ENCODE measurements at regions of chr18 and their contacts with region 1.

Region 1: GRCh38 chr18:6885992-6886796 is 156.7 kb downstream of the ARHGAP28 start:
- DNase-seq: peak in 1 of 2 donors; percentile 44
- H3K4me3 ChIP-seq: no peak overlapping the region
- CTCF ChIP-seq: no peak
- POLR2A ChIP-seq: no peak

Region 2: GRCh38 chr18:5868218-5869115 is 1017.7 kb before region 1 on chr18:
- intact Hi-C with region 1: loop called (anchors 2 kb)
- DNase-seq: peak; percentile 59 to 87
- H3K4me3 ChIP-seq: no peak overlapping the region
- CTCF ChIP-seq: no peak
- POLR2A ChIP-seq: no peak

Region 3: GRCh38 chr18:6543330-6543908 is 342.8 kb before region 1 on chr18:
- intact Hi-C with region 1: loop called (anchors 5 kb)
- DNase-seq: no peak
- H3K4me3 ChIP-seq: no peak overlapping the region
- CTCF ChIP-seq: no peak
- POLR2A ChIP-seq: no peak

Measured in lower leg skin (tissue), 4 donors.